ENCODE measurements at regions of chr21 and their contacts with region 1.

Region 1: GRCh38 chr21:23374155-23374554 is 2233.1 kb downstream of the MRPL39 start:
- DNase-seq: no peak
- ATAC-seq: no peak
- H3K4me3 ChIP-seq: no peak overlapping the region
- H3K4me3 Mint-ChIP-seq: no peak overlapping the region
- H3K27ac ChIP-seq: no peak overlapping the region
- H3K27ac Mint-ChIP-seq: no peak overlapping the region
- H3K4me1 ChIP-seq: no peaks in the 10 kb centered on the region
- H3K4me1 Mint-ChIP-seq: no peaks in the 10 kb centered on the region
- H3K27me3 ChIP-seq: no peaks in the 10 kb centered on the region
- H3K27me3 Mint-ChIP-seq: no peaks in the 10 kb centered on the region
- CTCF ChIP-seq: no peak

Region 2: GRCh38 chr21:23356905-23357304 is 17.2 kb before region 1 on chr21:
- CTCF ChIA-PET with region 1: no interaction called
- POLR2A ChIA-PET with region 1: interaction called, 10 read pairs
- intact Hi-C with region 1: no loop called
- DNase-seq: no peak
- ATAC-seq: no peak
- H3K4me3 ChIP-seq: no peak overlapping the region
- H3K4me3 Mint-ChIP-seq: no peak overlapping the region
- H3K27ac ChIP-seq: no peak overlapping the region
- H3K27ac Mint-ChIP-seq: no peak overlapping the region
- H3K4me1 ChIP-seq: no peaks in the 10 kb centered on the region
- H3K4me1 Mint-ChIP-seq: no peaks in the 10 kb centered on the region
- H3K27me3 ChIP-seq: no peaks in the 10 kb centered on the region
- H3K27me3 Mint-ChIP-seq: no peaks in the 10 kb centered on the region
- CTCF ChIP-seq: no peak

Measured in B cell (primary cell).